A673 (cell line): ENCODE measurements at regions of chr1 and their contacts with region 1.

Region 1: GRCh38 chr1:201254625-201255506 is 28.4 kb upstream of the PKP1 start:
- DNase-seq: peak; percentile 78
- H3K4me3 ChIP-seq: no peak overlapping the region
- H3K27ac ChIP-seq: peak overlapping the region; percentile 63
- H3K4me1 ChIP-seq: peaks cover 4% of the 10 kb centered on the region
- H3K27me3 ChIP-seq: no peaks in the 10 kb centered on the region
- CTCF ChIP-seq: peak; percentile 99

Region 2: DNA sequence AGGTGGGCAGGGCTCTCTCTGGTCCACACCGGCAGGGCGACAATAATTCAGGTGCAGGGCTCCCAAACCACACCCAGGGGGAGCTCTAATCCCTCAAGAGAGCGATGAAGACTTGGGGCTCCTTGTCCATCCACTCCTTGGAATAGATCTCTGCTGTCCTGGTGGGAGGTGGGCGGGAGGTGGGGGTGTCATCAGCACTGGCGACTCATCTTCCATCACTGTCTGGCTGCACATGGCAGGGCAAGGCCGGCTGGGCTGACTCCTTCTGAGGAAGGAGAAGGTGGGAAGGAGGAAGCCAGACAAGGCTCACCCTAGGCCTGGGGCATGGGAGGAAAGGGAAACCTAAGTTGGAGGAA is 93.3 kb after region 1 on chr1:
- CTCF ChIA-PET with region 1: interaction called, 5 read pairs
- POLR2A ChIA-PET with region 1: no interaction called
- intact Hi-C with region 1: loop called (anchors 5 kb)
- DNase-seq: peak; percentile 87
- H3K4me3 ChIP-seq: no peak overlapping the region
- H3K27ac ChIP-seq: no peak overlapping the region
- H3K4me1 ChIP-seq: peaks cover 26% of the 10 kb centered on the region
- H3K27me3 ChIP-seq: no peaks in the 10 kb centered on the region
- CTCF ChIP-seq: peak; percentile 86

Region 3: DNA sequence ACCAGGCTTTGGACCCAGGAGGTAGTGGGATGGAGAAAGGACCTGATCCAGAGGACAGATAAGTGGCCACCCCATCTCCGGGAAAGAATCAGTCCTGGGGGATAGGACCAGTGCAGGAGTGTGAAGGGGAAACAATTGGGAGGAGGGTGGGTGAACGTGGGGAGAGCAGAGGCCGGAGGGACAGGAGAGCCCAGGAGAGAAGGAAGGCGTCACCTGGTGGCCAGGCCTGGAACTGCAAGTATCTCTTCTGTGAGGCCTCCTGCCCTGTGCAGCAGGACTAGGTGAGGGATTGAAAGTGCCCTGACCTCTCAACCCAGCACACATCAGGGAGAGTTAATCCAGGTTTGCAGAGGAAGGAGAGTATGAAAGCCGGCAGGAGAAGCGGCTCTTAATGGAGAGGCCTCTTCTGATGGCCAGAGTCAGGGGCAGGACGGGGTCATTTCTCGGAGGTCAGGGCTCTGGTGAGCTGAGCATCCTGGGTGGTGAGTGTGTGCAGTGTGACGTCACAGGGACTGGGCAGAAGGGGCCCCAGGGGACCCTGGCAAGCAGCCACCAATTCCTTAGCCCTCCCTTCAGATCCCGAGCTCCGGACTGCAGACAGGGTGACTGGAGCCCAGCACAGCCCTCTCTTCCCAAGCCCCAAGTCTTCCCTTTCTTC is 153.4 kb after region 1 on chr1:
- CTCF ChIA-PET with region 1: no interaction called
- POLR2A ChIA-PET with region 1: no interaction called
- intact Hi-C with region 1: loop called (anchors 1 kb)
- DNase-seq: peak; percentile 84
- H3K4me3 ChIP-seq: no peak overlapping the region
- H3K27ac ChIP-seq: no peak overlapping the region
- H3K4me1 ChIP-seq: no peaks in the 10 kb centered on the region
- H3K27me3 ChIP-seq: no peaks in the 10 kb centered on the region
- CTCF ChIP-seq: peak; percentile 95